Activated T-helper 1 cell treated with anti-CD3 and anti-CD28 coated beads, Interleukin-12 subunit alpha, Interleukin-12 subunit beta, Interleukin-2, Interleukin-4 antibody, amounts not matched to agents 30 ng/mL and 10 ng/mL and 1 ng/mL, durations not matched to agents 14 hours and 24 hours and 36 hours (primary cell): ENCODE measurements at regions of chr6 and their contacts with region 1.

Region 1: GRCh38 chr6:14711056-14711703 is 534.7 kb upstream of the JARID2 start:
- DNase-seq: peak; percentile 56
- H3K4me3 Mint-ChIP-seq: peak overlapping the region; percentile 19
- H3K27ac Mint-ChIP-seq: peak overlapping the region; percentile 92
- H3K4me1 Mint-ChIP-seq: peaks cover 36% of the 10 kb centered on the region
- H3K27me3 Mint-ChIP-seq: peaks cover 4% of the 10 kb centered on the region

Region 2: DNA sequence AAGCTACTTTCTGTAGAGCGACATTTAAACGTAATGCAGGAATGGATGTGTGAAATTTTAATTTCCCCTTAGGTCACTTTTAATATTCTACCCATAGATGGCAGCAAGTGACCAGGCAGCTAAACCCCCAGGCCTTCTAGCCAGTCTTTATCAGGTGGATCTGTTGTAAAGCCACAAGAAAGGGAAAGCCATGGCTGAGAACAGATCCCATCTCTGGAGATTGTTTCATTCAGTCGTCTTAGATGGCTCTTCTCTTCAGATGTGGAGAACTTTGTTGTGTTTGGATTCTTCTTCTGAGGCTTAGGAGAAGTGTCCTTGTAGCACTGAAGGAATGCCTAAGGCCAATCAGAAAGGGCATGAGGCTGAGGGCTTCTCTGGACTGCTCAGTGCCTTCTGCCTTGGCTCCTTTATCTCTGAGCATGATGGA is 802.2 kb before region 1 on chr6:
- intact Hi-C with region 1: loop called (anchors 2 kb)
- DNase-seq: peak; percentile 10
- H3K4me3 Mint-ChIP-seq: no peak overlapping the region
- H3K27ac Mint-ChIP-seq: no peak overlapping the region
- H3K4me1 Mint-ChIP-seq: no peaks in the 10 kb centered on the region
- H3K27me3 Mint-ChIP-seq: peaks cover 35% of the 10 kb centered on the region

Region 3: GRCh38 chr6:14270925-14271791 is 440.0 kb before region 1 on chr6:
- intact Hi-C with region 1: loop called (anchors 5 kb)
- DNase-seq: peak; percentile 66
- H3K4me3 Mint-ChIP-seq: peak overlapping the region; percentile 62
- H3K27ac Mint-ChIP-seq: peak overlapping the region; percentile 90
- H3K4me1 Mint-ChIP-seq: peaks cover 40% of the 10 kb centered on the region
- H3K27me3 Mint-ChIP-seq: no peaks in the 10 kb centered on the region

Region 4: DNA sequence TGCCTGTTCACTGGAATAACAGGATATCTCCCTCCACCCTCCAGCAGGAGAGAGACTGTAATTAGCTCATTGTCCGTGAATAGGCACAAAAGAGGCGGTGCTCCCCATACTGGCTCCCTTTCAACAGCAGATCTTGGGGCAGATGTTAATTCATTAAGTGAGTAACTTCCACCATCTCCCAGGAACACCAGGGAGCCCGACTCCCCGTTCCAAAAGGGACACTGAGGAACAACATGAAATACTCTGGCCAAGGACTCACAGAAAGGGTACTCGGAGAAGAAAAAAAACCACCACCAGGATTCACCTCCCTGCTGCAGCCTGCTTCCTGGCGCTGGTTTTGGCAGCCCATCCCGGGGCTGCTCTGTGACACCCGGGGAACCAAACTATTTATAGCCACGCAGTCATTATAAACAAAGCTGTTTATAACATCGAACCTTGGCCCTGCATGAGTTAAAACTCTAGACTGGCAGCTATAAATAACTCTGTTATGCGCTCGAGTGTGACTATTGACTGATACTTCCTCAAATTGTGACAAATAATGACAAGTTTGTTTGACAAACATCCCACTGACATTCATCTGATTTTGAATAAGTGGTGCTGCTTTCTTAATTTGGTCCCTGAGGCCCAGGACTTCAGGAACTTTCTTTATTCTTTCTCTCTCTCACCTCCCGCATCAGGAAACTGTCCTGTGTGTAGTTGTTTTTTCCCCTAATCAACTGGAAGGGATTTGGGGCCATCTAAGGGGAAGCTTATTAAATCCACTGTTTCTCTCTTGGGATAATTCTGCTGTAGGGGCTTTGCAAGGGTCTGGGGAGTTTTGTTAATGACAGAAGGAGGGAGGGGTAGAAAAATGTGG is 72.0 kb before region 1 on chr6:
- intact Hi-C with region 1: loop called (anchors 1 kb)
- DNase-seq: no peak
- H3K4me3 Mint-ChIP-seq: no peak overlapping the region
- H3K27ac Mint-ChIP-seq: no peak overlapping the region
- H3K4me1 Mint-ChIP-seq: peaks cover 70% of the 10 kb centered on the region
- H3K27me3 Mint-ChIP-seq: peaks cover 8% of the 10 kb centered on the region

Region 5: GRCh38 chr6:14660806-14661579 is 50.2 kb before region 1 on chr6:
- intact Hi-C with region 1: loop called (anchors 5 kb)
- DNase-seq: peak; percentile 59
- H3K4me3 Mint-ChIP-seq: no peak overlapping the region
- H3K27ac Mint-ChIP-seq: no peak overlapping the region
- H3K4me1 Mint-ChIP-seq: peaks cover 59% of the 10 kb centered on the region
- H3K27me3 Mint-ChIP-seq: peaks cover 16% of the 10 kb centered on the region

Region 6: DNA sequence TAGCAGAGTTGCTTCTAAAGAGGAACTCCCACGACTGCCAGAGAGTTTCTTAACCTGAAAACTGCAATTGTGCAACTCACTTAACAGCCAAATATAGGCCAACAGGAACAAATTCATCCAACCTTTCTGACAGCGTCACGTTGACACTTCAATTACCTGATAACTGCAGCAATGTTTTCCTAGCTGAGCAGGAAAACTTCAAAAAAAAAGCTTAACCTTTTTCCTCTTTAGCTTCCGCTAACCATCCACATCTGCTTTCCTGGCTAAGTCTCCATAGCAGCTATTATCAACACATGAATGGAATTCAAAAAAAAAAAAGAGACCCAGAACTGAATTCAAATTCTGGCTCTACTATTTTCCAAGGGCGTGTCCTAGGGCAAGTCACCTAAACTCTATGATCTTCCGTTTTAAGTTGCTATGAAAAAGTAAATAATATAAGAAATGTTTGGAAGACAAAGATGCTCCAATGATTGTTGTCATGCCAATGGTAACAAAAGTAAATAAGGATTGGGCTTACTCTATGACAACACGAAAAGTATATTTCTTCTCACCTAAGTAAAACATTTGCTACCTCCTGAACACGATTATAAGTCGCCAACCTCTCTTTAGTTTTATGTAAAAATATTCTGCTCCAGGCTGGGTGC is 10.0 kb after region 1 on chr6:
- intact Hi-C with region 1: no loop called
- DNase-seq: no peak
- H3K4me3 Mint-ChIP-seq: no peak overlapping the region
- H3K27ac Mint-ChIP-seq: peak overlapping the region; percentile 49
- H3K4me1 Mint-ChIP-seq: peaks cover 58% of the 10 kb centered on the region
- H3K27me3 Mint-ChIP-seq: no peaks in the 10 kb centered on the region

Region 7: DNA sequence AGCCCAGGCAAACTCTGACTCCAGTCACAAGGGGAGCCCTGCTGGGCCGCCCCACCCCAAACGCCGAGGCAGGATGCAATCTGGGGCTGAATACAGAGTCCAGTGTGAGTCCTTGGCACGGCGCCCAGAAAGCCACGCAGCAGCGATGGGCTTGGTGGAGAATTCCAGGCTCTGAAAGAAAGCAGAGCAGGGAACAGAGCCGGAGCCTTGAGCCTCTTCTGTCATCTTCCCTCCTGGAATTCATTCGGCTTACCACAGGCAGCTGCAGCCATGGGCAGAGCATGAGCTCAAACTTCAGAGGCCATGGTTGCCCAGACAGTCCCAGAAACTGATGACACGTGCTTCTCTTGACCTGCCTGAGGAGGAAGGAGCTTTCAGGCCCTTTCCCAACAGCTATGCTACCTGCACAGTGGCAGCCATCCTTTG is 93.6 kb after region 1 on chr6:
- intact Hi-C with region 1: no loop called
- DNase-seq: no peak
- H3K4me3 Mint-ChIP-seq: no peak overlapping the region
- H3K27ac Mint-ChIP-seq: no peak overlapping the region
- H3K4me1 Mint-ChIP-seq: peaks cover 6% of the 10 kb centered on the region
- H3K27me3 Mint-ChIP-seq: no peaks in the 10 kb centered on the region